ENCODE measurements at regions of chr12 and their contacts with region 1.

Region 1: GRCh38 chr12:124567661-124568373 is 405 bp upstream of the NCOR2 start:
- DNase-seq: peak; percentile 96 to 97
- ATAC-seq: peak; percentile 83 to 92 (median 88)
- H3K4me3 ChIP-seq: peak overlapping the region in 9 of 10 donors; percentile 24 to 99 (median 49)
- H3K27ac ChIP-seq: peak overlapping the region; percentile 44 to 95 (median 90)
- H3K4me1 ChIP-seq: peaks cover 19 to 57% (median 46%) of the 10 kb centered on the region in 9 donors
- H3K27me3 ChIP-seq: no peaks in the 10 kb centered on the region
- CTCF ChIP-seq: peak in 3 of 9 donors; percentile 25 to 32 (median 32)

Region 2: GRCh38 chr12:124369055-124369900 is 198.5 kb before region 1 on chr12:
- intact Hi-C with region 1: loop called in 4 of 10 experiments (anchors 5 to 10 kb)
- DNase-seq: peak; percentile 91 to 94
- ATAC-seq: peak; percentile 83 to 93 (median 88)
- H3K4me3 ChIP-seq: peak overlapping the region in 2 of 10 donors; percentile 4 to 18
- H3K27ac ChIP-seq: peak overlapping the region; percentile 81 to 96 (median 91)
- H3K4me1 ChIP-seq: peaks cover 45 to 83% (median 66%) of the 10 kb centered on the region in 9 donors
- H3K27me3 ChIP-seq: no peaks in the 10 kb centered on the region
- CTCF ChIP-seq: peak; percentile 17 to 69 (median 51)

Region 3: DNA sequence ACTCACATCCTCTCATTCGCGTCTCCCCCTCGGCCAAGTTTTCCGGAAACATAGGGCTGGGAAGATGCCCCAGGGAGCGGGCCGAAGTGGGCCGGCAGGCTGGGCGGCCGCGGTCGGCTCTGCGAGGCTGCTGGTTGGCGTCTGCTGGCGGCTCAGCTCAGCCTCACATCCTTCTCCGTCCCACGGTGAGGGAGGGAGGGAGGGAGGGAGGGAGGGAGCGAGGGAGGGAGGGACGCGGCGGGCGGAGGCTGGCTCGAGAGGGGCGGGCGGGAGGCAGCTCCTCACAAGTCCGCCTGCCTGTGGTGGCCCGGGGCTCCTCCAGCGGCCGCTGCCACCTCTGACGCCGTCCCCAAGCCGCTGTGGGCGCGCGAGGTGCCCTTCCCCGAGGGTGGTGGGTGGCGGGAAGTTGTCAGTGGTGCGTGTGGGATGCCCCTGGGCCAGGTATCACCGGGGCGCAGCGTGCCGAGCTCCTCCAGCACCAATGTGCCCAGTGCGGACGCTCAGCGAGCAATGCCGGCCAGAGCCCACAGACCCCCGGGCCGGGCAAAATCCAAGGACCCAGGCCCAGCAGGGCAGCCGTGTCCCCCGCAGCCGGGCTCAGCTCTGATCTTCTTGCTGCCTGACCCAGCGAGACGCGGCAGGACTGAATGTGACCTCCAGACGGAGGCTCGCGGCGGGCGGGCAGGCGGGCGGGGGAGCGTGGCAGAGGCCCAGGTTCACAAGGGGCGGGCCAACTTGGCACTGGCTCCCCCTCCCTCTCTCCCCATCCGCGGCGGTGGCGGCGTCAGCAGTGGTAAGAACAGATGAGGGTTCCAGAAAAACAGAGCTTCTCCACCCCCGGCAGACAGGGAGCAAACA is 178.9 kb before region 1 on chr12:
- intact Hi-C with region 1: loop called in 2 of 10 experiments (anchors 10 kb)
- DNase-seq: peak; percentile 86 to 89
- ATAC-seq: peak; percentile 53 to 71 (median 60)
- H3K4me3 ChIP-seq: peak overlapping the region; percentile 41 to 74 (median 59)
- H3K27ac ChIP-seq: peak overlapping the region; percentile 88 to 99 (median 97)
- H3K4me1 ChIP-seq: peaks cover 61 to 100% (median 89%) of the 10 kb centered on the region in 9 donors
- H3K27me3 ChIP-seq: no peaks in the 10 kb centered on the region
- CTCF ChIP-seq: peak in 3 of 9 donors; percentile 8 to 32 (median 25)

Region 4: DNA sequence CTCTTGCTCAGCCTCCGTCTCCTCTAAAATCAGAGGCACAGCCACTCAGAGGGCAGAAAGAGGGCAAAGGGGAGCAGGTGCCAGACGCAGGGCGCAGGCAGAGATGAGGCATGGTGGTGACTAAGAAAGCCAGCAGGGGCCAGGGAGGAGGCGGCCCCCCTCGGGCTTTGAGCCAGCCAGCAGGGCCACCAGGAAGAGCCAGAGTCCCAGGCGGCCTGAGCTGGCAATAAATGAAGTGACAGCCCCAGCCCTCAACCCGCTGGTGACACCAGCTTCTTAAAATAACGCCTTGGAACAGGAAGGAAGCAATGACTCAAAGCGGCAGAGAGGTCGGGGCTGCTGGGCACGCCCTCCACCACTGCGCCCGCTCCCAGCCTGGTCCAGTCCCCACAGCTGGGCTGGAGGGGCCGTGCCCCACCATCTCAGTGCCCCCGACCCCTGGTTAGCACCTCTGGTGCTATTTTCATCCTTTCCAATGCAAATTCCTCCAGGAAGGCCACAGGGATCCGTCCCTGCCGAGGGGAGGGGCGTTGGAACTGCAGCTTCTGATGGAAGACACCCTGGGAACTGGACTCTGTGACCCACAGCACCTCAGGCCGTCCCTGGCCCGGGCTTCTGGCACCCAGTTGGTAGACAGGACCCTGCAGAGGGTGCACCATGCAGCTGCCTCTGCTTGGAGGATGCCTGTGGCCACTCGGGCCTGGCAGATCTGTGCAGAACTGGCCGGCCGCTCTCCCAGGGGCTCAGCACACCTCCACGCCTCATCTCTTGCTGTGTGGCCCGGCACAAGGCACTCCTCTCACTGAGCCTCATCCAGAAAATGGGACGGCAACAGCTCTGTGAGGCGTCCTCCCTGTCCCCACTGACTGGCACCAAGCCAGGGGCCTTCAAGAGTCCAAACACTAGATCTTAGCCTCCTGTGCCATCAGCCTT is 114.1 kb before region 1 on chr12:
- intact Hi-C with region 1: loop called in 2 of 10 experiments (anchors 5 to 10 kb)
- DNase-seq: peak; percentile 90 to 93
- ATAC-seq: peak; percentile 76 to 88 (median 84)
- H3K4me3 ChIP-seq: peak overlapping the region in 6 of 10 donors; percentile 16 to 31 (median 25)
- H3K27ac ChIP-seq: peak overlapping the region; percentile 61 to 95 (median 88)
- H3K4me1 ChIP-seq: peaks cover 34 to 77% (median 72%) of the 10 kb centered on the region in 9 donors
- H3K27me3 ChIP-seq: no peaks in the 10 kb centered on the region
- CTCF ChIP-seq: peak in 4 of 9 donors; percentile 10 to 39 (median 29)

Region 5: GRCh38 chr12:124625867-124626675 is 58.3 kb after region 1 on chr12:
- intact Hi-C with region 1: loop called in 1 of 10 experiments (anchors 5 kb)
- DNase-seq: peak; percentile 91
- ATAC-seq: peak; percentile 84 to 97 (median 92)
- H3K4me3 ChIP-seq: peak overlapping the region in 1 of 10 donors; percentile 24
- H3K27ac ChIP-seq: peak overlapping the region; percentile 65 to 95 (median 83)
- H3K4me1 ChIP-seq: peaks cover 13 to 64% (median 41%) of the 10 kb centered on the region in 9 donors
- H3K27me3 ChIP-seq: no peaks in the 10 kb centered on the region
- CTCF ChIP-seq: no peak

Region 6: GRCh38 chr12:124680863-124681778 is 113.3 kb after region 1 on chr12:
- intact Hi-C with region 1: loop called in 6 of 10 experiments (anchors 5 to 10 kb)
- DNase-seq: peak; percentile 60 to 69
- ATAC-seq: peak in 7 of 8 donors; percentile 41 to 86 (median 72)
- H3K4me3 ChIP-seq: no peak overlapping the region
- H3K27ac ChIP-seq: peak overlapping the region; percentile 11 to 91 (median 78)
- H3K4me1 ChIP-seq: peaks cover 27 to 82% (median 61%) of the 10 kb centered on the region in 9 donors
- H3K27me3 ChIP-seq: no peaks in the 10 kb centered on the region
- CTCF ChIP-seq: peak in 7 of 9 donors; percentile 19 to 50 (median 40)

Region 7: DNA sequence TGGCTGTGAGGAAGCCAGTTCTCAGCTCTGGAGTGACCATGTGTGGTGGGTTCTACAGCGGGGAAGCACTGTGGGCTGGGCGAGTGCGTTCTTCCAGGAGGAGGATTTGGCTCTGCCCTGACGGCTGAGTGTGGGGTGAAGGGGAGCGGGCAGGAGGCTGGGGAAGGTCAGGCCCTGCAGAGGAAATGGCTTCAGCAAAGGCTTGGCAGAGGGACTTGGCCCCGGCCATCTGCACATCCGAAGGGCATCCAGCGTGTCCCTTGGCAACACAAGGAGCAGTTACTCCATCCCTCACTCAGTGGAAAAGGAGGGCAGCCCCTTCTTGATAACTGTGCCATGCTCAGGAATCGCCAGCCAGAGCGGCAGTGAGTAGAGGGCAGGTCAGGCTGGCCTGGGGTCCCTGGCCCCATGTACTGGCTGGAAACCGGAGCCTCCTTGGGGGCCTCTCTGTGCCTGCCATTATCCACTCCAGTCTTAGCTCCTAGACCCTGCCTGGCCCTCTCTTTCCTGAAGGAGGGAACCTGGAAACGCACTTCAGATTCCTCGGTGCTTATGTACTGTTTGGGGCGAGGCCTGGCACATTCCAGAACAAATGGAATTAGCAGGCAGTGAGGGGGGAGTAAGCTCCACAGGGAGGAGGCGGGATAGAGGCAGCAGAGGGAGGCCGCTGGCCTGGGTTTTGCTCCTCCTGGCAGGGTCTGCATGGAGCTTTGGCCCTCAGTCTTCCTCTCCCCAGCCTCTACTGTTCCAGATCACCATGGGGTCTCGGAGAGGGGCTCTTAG is 133.2 kb after region 1 on chr12:
- intact Hi-C with region 1: no loop called
- DNase-seq: no peak
- ATAC-seq: peak; percentile 31 to 72 (median 60)
- H3K4me3 ChIP-seq: no peak overlapping the region
- H3K27ac ChIP-seq: peak overlapping the region in 8 of 10 donors; percentile 6 to 85 (median 80)
- H3K4me1 ChIP-seq: peaks cover 8 to 53% (median 25%) of the 10 kb centered on the region in 9 donors
- H3K27me3 ChIP-seq: no peaks in the 10 kb centered on the region
- CTCF ChIP-seq: no peak